Activated naive CD4-positive, alpha-beta T cell treated with anti-CD3 and anti-CD28 coated beads for 36 hours (primary cell): ENCODE measurements at regions of chr2 and their contacts with region 1.

Region 1: GRCh38 chr2:74653985-74654882 is at the start of gene SEMA4F:
- DNase-seq: peak; percentile 97
- H3K4me3 Mint-ChIP-seq: peak within 1 kb of the TSS; percentile 72
- H3K27ac Mint-ChIP-seq: peak within 1 kb of the TSS; percentile 33
- H3K4me1 Mint-ChIP-seq: peaks cover 11% of the 10 kb centered on the region
- H3K27me3 Mint-ChIP-seq: peaks cover under 1% of the 10 kb centered on the region
- total RNA-seq, gene SEMA4F: 4.3 to 5.3 TPM

Region 2: GRCh38 chr2:72745679-72746368 is 1908.4 kb before region 1 on chr2:
- CTCF ChIA-PET with region 1: no interaction called
- intact Hi-C with region 1: no loop called
- DNase-seq: no peak
- H3K4me3 Mint-ChIP-seq: no peak overlapping the region
- H3K27ac Mint-ChIP-seq: no peak overlapping the region
- H3K4me1 Mint-ChIP-seq: peaks cover 2% of the 10 kb centered on the region
- H3K27me3 Mint-ChIP-seq: no peaks in the 10 kb centered on the region

Region 3: DNA sequence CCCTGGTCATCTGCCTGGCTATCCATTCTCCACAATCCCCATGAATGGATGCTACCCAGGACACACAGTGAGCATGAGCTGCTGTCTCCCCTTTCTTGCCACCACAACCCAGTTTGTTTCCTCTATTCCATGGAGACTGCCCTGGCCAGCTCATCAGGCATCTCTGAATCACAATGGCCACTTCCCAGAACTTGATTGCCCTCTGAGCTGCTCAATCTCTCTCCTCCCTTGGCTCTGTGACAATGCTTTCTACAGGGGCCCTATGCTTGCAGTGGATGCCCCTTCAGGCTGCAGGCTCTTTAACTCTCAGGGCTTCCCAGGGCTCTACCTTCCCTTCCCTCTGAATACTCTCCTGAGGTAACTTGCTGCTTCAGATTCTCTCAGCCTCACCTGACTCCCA is 296.6 kb before region 1 on chr2:
- CTCF ChIA-PET with region 1: no interaction called
- intact Hi-C with region 1: no loop called
- DNase-seq: no peak
- H3K4me3 Mint-ChIP-seq: no peak overlapping the region
- H3K27ac Mint-ChIP-seq: no peak overlapping the region
- H3K4me1 Mint-ChIP-seq: no peaks in the 10 kb centered on the region
- H3K27me3 Mint-ChIP-seq: no peaks in the 10 kb centered on the region

Region 4: GRCh38 chr2:74507145-74507925 is 146.9 kb before region 1 on chr2 and contains the start of gene PCGF1:
- CTCF ChIA-PET with region 1: no interaction called
- intact Hi-C with region 1: loop called (anchors 2 kb)
- DNase-seq: peak; percentile 99
- H3K4me3 Mint-ChIP-seq: peak within 1 kb of the TSS; percentile 91
- H3K27ac Mint-ChIP-seq: peak within 1 kb of the TSS; percentile 98
- H3K4me1 Mint-ChIP-seq: peaks cover 40% of the 10 kb centered on the region
- H3K27me3 Mint-ChIP-seq: peaks cover 41% of the 10 kb centered on the region
- total RNA-seq, gene PCGF1: 21.1 to 24.4 TPM